ENCODE measurements at regions of chr4 and their contacts with region 1.

Region 1: DNA sequence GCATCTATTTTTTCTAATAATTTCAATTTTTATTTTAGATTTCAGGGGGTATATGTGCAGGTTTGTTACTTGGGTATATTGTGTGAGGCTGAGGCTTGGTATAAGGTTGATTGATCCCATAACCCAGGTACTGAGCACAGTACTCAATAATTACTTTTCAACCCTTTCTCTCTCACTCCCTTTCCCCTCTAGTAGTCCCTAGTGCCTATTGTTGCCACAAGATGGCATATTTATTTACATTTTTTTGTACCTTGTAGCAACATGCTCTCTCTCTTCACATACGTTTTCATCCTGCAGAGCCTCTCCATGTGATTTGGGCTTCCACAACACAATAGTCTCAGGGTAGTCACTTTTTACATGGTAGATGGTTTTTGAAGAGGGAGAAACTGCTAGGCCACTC is 172.0 kb downstream of the ATOH1 start:
- DNase-seq: no peak
- ATAC-seq: no peak
- H3K4me3 ChIP-seq: no peak overlapping the region
- H3K27ac ChIP-seq: no peak overlapping the region
- H3K4me1 ChIP-seq: no peaks in the 10 kb centered on the region
- H3K27me3 ChIP-seq: no peaks in the 10 kb centered on the region
- CTCF ChIP-seq: peak in 1 of 3 experiments; percentile 17; a peak in 1 of 6 replicates
- EP300 ChIP-seq: no peak
- POLR2A ChIP-seq: no peak
- RAD21 ChIP-seq: no peak; a peak in 1 of 4 replicates

Region 2: DNA sequence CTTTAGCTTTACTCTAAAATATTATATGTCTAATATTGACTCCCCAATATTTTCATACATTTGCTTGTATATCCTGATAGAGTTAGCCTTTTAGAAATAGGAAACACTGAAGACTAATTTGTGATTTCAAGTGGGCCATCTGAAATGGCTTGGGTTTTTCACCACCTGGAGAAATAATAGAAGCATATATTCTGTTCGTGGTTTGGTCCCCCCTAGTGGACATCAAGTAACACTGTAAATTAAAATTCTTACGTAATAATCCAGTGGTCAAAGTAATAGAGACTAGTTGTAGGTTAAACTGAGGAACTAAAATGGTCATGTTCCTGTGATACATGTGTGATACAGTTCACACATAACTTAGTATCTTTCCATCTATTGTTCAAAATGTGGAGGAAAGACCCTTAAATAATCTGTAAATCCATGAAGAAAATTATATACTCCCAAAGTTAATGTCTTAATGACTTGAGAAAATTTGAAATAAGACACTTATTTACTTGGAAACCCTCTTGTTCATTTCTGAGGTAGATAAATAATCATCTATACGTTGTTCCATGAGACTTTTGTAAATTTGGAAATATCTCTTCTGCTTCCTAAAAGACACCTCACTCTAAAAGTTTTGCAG is 127.3 kb after region 1 on chr4:
- CTCF ChIA-PET with region 1: no interaction called
- POLR2A ChIA-PET with region 1: no interaction called
- in situ Hi-C with region 1: no loop called
- intact Hi-C with region 1: loop called (anchors 10 kb)
- DNase-seq: peak; percentile 29 to 46 (median 42)
- ATAC-seq: peak; percentile 85
- H3K4me3 ChIP-seq: no peak overlapping the region
- H3K27ac ChIP-seq: no peak overlapping the region
- H3K4me1 ChIP-seq: no peaks in the 10 kb centered on the region
- H3K27me3 ChIP-seq: no peaks in the 10 kb centered on the region
- CTCF ChIP-seq: peak; percentile 47 to 59 (median 48); a peak in 4 of 6 replicates
- EP300 ChIP-seq: no peak
- POLR2A ChIP-seq: no peak
- RAD21 ChIP-seq: peak; percentile 34 to 49